Mammary epithelial cell (primary cell): ENCODE measurements at regions of chr1 and their contacts with region 1.

Region 1: GRCh38 chr1:16078925-16079656 is 5.6 kb upstream of the FAM131C start:
- DNase-seq: peak; percentile 55
- H3K4me3 ChIP-seq: no peak overlapping the region
- H3K27ac ChIP-seq: no peak overlapping the region
- H3K4me1 ChIP-seq: peaks cover 29% of the 10 kb centered on the region
- H3K27me3 ChIP-seq: no peaks in the 10 kb centered on the region
- CTCF ChIP-seq: peak; percentile 93 to 96

Region 2: GRCh38 chr1:16116002-16116401 is 36.9 kb after region 1 on chr1:
- CTCF ChIA-PET with region 1: no interaction called
- dilution Hi-C with region 1: no loop called
- in situ Hi-C with region 1: no loop called
- intact Hi-C with region 1: no loop called
- DNase-seq: no peak
- H3K4me3 ChIP-seq: no peak overlapping the region
- H3K27ac ChIP-seq: no peak overlapping the region
- H3K4me1 ChIP-seq: peaks cover 7% of the 10 kb centered on the region
- H3K27me3 ChIP-seq: no peaks in the 10 kb centered on the region
- CTCF ChIP-seq: no peak

Region 3: GRCh38 chr1:16146279-16147155 is 67.4 kb after region 1 on chr1:
- CTCF ChIA-PET with region 1: no interaction called
- dilution Hi-C with region 1: no loop called
- in situ Hi-C with region 1: loop called in 1 of 2 experiments (anchors 5 kb)
- intact Hi-C with region 1: loop called (anchors 2 kb)
- DNase-seq: peak; percentile 72
- H3K4me3 ChIP-seq: peak overlapping the region; percentile 10 to 35 (median 11)
- H3K27ac ChIP-seq: peak overlapping the region; percentile 66
- H3K4me1 ChIP-seq: peaks cover 91% of the 10 kb centered on the region
- H3K27me3 ChIP-seq: no peaks in the 10 kb centered on the region
- CTCF ChIP-seq: no peak

Region 4: DNA sequence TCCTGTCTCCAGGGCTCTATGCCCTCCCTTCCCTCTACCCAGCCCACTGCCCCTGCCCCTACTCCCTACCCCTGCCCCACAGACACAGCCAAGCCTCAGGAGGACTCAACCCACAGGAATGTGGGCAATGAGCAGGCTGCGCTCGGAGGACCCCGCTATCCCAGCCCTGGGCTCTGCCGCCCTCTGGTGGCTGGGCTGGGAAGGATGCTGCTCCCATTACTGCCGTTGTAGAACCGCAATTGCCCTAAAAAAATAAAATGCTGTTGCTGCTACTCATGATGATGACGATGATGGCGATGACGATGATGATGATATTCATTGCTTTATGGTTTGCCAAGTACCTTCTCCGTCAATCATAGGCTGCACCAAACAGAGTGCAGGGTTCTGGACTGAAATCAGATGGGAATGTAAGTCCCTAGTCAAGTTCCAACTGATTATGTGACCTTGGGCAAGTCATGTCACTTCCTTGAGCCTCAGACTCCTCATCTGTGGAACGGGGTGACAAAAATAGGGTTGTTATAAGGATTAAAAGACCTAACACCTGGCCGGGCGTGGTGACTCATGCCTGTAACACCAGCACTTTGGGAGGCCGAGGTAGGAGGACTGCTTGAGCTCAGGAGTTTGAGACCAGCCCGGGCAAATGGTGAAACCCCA is 108.8 kb after region 1 on chr1:
- CTCF ChIA-PET with region 1: interaction called, 5 read pairs
- dilution Hi-C with region 1: no loop called
- in situ Hi-C with region 1: loop called (anchors 5 kb)
- intact Hi-C with region 1: loop called (anchors 1 kb)
- DNase-seq: peak; percentile 89
- H3K4me3 ChIP-seq: no peak overlapping the region
- H3K27ac ChIP-seq: peak overlapping the region; percentile 58
- H3K4me1 ChIP-seq: peaks cover 54% of the 10 kb centered on the region
- H3K27me3 ChIP-seq: no peaks in the 10 kb centered on the region
- CTCF ChIP-seq: peak; percentile 85 to 97

Region 5: DNA sequence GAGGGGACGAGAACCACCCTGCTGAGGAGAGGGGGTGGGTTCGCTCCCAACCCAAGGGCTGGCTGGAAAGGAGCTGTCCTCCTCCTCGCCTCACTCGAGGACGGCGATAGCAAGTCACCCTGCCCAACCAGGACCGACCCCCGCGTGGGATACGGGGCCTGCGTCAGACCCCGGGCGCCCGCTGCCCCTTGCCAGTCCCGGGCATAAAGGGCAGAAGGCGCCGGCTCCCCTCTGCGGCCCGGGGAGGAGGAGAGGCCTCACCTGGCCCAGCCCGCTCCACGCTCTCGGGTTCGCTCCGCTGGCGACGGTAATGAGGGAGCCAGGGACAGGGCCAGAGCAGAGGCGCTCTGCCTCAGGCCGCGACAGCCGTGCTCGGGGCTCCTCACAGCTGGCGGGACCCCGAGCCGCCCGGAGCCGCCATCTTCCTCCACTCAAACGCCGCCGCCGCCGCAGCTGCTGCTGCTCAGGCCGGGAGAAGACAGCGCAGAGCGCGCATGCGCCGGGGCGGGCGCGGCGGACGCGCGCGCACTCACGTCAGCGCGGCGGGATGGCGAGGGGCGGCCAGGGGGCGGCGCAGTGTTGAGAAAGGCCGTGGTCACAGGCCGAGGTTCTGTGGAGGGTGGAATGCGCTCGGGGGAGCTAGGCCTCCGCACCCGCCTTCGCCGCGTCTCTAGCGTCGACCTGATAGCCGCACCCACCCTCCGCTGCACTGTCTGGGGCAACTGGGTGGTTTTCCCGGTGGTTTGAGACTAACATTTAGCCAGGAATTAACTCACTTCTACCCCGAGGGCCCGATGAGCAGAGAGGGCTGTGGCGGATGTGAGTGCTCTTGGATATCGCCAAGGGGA is 273.1 kb after region 1 on chr1 and contains the start of gene FBXO42:
- CTCF ChIA-PET with region 1: no interaction called
- dilution Hi-C with region 1: no loop called
- in situ Hi-C with region 1: loop called in 1 of 2 experiments (anchors 25 kb)
- intact Hi-C with region 1: no loop called
- DNase-seq: peak; percentile 88
- H3K4me3 ChIP-seq: peak within 1 kb of the TSS; percentile 80 to 99 (median 83)
- H3K27ac ChIP-seq: peak within 1 kb of the TSS; percentile 74
- H3K4me1 ChIP-seq: peaks cover 16% of the 10 kb centered on the region
- H3K27me3 ChIP-seq: no peaks in the 10 kb centered on the region
- CTCF ChIP-seq: peak; percentile 9 to 32
- total RNA-seq, gene FBXO42: 19.8 to 21.4 TPM

Region 6: DNA sequence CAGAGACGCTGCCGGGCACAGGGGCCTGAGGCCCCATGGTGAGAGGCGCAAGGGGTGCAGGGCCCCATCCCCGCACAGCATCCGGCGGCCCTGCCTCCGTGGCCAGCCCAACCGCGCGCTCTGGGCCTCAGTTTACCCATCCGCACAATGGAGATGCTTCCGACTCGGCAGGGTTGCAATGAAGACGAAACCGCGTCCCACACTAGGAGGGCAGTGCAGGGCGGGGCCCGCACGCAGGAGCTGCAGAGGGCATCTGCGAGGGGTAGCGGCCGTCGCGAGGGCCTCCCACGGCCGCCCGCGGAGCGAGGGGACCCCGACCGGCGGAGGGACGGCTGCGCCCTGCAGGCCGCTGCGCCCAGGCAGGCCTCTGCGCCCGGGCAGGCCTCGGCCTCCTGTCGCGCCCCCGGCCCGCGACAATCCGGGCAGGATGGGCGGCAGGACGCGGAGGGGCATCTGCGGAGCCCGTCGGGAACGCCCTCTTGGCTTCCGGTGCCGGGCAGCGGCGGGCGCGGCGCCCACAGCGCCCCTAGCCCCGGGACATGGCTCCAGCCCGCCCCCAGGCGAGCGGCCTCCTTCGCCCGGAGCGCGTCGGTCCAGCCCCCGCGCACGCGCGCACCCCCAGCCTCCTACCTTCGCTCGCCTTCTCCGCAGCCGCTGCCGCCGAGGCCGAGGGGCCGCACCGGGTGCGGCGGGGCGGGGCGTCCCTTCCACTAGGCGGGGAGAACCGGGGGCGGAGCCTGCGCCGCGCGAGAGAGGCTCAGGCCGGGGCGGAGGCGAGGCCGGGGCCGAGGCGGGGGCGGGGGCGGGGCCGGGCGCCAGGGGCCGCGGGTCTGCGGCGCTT is 419.7 kb after region 1 on chr1:
- CTCF ChIA-PET with region 1: no interaction called
- dilution Hi-C with region 1: no loop called
- in situ Hi-C with region 1: no loop called
- intact Hi-C with region 1: loop called (anchors 10 kb)
- DNase-seq: peak; percentile 71
- H3K4me3 ChIP-seq: peak overlapping the region; percentile 40 to 72 (median 64)
- H3K27ac ChIP-seq: no peak overlapping the region
- H3K4me1 ChIP-seq: peaks cover 9% of the 10 kb centered on the region
- H3K27me3 ChIP-seq: no peaks in the 10 kb centered on the region
- CTCF ChIP-seq: no peak